ENCODE measurements at regions of chr19 and their contacts with region 1.

Region 1: GRCh38 chr19:16628183-16628983 is at the start of gene MED26:
- DNase-seq: peak; percentile 84
- H3K4me3 ChIP-seq: peak within 1 kb of the TSS; percentile 91
- H3K27ac ChIP-seq: peak within 1 kb of the TSS; percentile 91
- H3K27me3 ChIP-seq: no peaks in the 10 kb centered on the region
- CTCF ChIP-seq: no peak
- polyA plus RNA-seq, gene MED26: 3.0 and 3.1 TPM in 2 replicates

Region 2: DNA sequence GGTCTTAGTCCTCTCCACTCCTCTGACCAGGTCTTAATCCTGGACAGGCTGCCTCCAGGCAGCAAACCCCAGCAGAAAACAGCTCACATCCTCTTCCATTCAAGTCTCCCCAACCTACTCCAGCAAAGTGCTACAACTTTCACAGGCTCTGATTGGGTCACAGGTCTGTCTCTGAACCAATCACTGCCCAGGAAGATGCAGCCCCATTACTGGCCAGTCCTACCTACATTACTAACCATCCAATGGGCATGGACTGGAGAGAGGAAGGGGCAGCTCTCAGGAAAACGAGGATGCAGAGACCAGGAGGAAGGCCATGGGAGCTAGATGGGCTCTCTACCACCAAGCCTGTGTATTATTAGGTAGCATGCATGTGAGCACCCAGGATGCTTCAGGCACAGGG is 12.6 kb before region 1 on chr19:
- CTCF ChIA-PET with region 1: interaction called, 3 read pairs
- POLR2A ChIA-PET with region 1: interaction called, 14 read pairs
- DNase-seq: no peak
- H3K4me3 ChIP-seq: no peak overlapping the region
- H3K27ac ChIP-seq: no peak overlapping the region
- H3K27me3 ChIP-seq: no peaks in the 10 kb centered on the region
- CTCF ChIP-seq: no peak

Region 3: GRCh38 chr19:16638666-16639065 is 10.3 kb after region 1 on chr19:
- CTCF ChIA-PET with region 1: no interaction called
- POLR2A ChIA-PET with region 1: interaction called, 14 read pairs
- DNase-seq: no peak
- H3K4me3 ChIP-seq: no peak overlapping the region
- H3K27ac ChIP-seq: no peak overlapping the region
- H3K27me3 ChIP-seq: no peaks in the 10 kb centered on the region
- CTCF ChIP-seq: no peak